ENCODE measurements at regions of chr4 and their contacts with region 1.

Region 1: DNA sequence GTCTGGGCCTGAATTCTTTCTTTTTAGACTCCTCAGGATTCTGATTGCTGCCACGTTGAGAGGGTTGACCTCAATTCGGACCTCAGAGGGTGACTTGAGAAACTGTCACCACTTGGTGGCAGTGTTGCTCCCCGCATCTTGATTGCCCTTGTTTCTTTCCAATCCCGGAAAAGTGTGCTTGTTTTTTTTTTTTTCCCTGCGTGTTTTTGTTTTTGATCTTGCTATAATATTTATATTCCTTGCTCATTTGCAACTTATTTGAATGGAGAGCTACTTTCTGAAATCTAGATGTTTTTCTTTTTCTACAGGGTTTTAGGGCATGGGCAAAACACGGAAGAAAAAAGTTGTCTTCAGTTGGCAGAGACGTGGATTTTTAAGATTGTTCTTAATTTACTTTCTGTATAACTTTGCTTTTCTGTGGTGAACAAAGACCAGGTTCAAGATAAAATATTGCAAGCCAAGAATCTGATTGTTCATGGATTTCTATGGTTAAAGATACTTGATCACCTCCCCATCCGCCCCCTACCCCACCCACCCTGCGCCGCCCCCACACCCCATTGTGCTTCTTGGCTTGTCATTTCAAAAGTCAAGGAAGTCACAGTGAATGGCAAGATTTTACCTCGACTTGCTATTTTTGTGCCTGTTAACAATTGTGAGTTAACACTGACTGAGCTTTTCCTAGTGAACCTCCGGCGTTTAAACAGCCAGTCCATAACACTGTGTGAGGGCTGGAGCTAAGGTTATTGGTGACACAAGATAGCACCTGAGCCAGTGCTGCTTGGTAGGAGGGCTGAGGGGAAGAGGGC is 102.1 kb downstream of the PTTG2 start:
- DNase-seq: peak; percentile 40 to 62
- ATAC-seq: peak; percentile 83 to 84
- H3K4me3 ChIP-seq: peak overlapping the region; percentile 20 to 43 (median 40)
- H3K27ac ChIP-seq: peak overlapping the region; percentile 3 to 60 (median 58)
- H3K4me1 ChIP-seq: peaks cover 0 to 5% of the 10 kb centered on the region in 2 donors
- H3K27me3 ChIP-seq: no peaks in the 10 kb centered on the region
- CTCF ChIP-seq: peak; percentile 53 to 86 (median 65)
- POLR2A ChIP-seq: no peak

Region 2: DNA sequence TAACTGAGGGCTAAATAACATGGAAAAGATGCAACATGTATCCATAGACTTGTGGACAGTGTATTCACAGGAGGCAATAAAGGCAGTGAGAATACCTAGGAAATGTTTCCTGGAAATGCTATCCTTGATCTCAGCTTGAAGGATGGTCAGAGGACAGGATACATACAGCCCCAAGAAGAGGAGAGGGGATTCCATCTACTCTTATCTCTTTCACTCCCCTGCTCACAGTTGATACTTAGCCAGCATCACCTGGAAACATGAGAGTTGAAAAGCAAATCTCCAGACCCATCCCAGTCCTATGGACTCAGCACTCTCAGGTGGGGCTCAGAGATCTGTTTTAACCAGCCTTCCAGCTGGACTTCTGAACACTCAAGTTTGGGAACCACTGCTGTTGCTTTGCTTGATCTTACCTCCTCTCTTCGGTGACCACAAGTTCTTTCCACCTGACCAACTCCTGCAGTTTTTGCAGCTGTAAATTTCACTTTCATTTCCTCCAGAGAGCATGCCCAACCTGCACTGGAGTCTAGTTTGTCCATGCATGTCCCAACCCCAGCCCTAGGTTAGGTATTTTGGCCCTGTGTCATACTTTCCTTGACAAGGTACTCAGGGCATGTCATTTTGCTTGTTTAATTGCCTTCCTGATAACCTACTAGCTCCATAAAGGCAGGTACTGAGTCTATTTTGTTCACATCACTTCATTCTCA is 386.6 kb before region 1 on chr4:
- in situ Hi-C with region 1: no loop called
- intact Hi-C with region 1: no loop called
- DNase-seq: no peak
- ATAC-seq: no peak
- H3K4me3 ChIP-seq: no peak overlapping the region
- H3K27ac ChIP-seq: no peak overlapping the region
- H3K4me1 ChIP-seq: peaks cover 44 to 48% of the 10 kb centered on the region in 2 donors
- H3K27me3 ChIP-seq: no peaks in the 10 kb centered on the region
- CTCF ChIP-seq: no peak
- POLR2A ChIP-seq: no peak

Region 3: GRCh38 chr4:38132107-38132673 is 69.9 kb after region 1 on chr4:
- in situ Hi-C with region 1: no loop called
- intact Hi-C with region 1: loop called (anchors 10 kb)
- DNase-seq: peak; percentile 31 to 49
- ATAC-seq: peak; percentile 76 to 91
- H3K4me3 ChIP-seq: no peak overlapping the region
- H3K27ac ChIP-seq: peak overlapping the region; percentile 2 to 68 (median 50)
- H3K4me1 ChIP-seq: peaks cover 0 to 5% of the 10 kb centered on the region in 2 donors
- H3K27me3 ChIP-seq: no peaks in the 10 kb centered on the region
- CTCF ChIP-seq: no peak
- POLR2A ChIP-seq: peak; percentile 11 to 55

Region 4: GRCh38 chr4:38179690-38180377 is 117.5 kb after region 1 on chr4:
- in situ Hi-C with region 1: loop called in 3 of 4 experiments (anchors 10 kb)
- intact Hi-C with region 1: loop called (anchors 5 kb)
- DNase-seq: peak; percentile 52 to 59
- ATAC-seq: peak; percentile 72 to 78
- H3K4me3 ChIP-seq: no peak overlapping the region
- H3K27ac ChIP-seq: no peak overlapping the region
- H3K4me1 ChIP-seq: peaks cover 3 to 12% of the 10 kb centered on the region in 2 donors
- H3K27me3 ChIP-seq: no peaks in the 10 kb centered on the region
- CTCF ChIP-seq: peak; percentile 79 to 94 (median 88)
- POLR2A ChIP-seq: no peak

Region 5: GRCh38 chr4:38675146-38676121 is 613.1 kb after region 1 on chr4:
- in situ Hi-C with region 1: no loop called
- intact Hi-C with region 1: loop called (anchors 5 kb)
- DNase-seq: peak; percentile 45 to 59
- ATAC-seq: peak; percentile 57 to 61
- H3K4me3 ChIP-seq: no peak overlapping the region
- H3K27ac ChIP-seq: peak overlapping the region; percentile 69 to 98 (median 72)
- H3K4me1 ChIP-seq: peaks cover 78 to 89% of the 10 kb centered on the region in 2 donors
- H3K27me3 ChIP-seq: no peaks in the 10 kb centered on the region
- CTCF ChIP-seq: peak; percentile 87 to 96 (median 91)
- POLR2A ChIP-seq: no peak

Region 6: GRCh38 chr4:38730830-38731646 is 668.7 kb after region 1 on chr4:
- in situ Hi-C with region 1: loop called in 2 of 4 experiments (anchors 25 kb)
- intact Hi-C with region 1: loop called (anchors 1 kb)
- DNase-seq: peak; percentile 37 to 65
- ATAC-seq: peak; percentile 73 to 75
- H3K4me3 ChIP-seq: no peak overlapping the region
- H3K27ac ChIP-seq: no peak overlapping the region
- H3K4me1 ChIP-seq: no peaks in the 10 kb centered on the region
- H3K27me3 ChIP-seq: no peaks in the 10 kb centered on the region
- CTCF ChIP-seq: peak; percentile 82 to 88 (median 85)
- POLR2A ChIP-seq: no peak

Region 7: GRCh38 chr4:38782452-38783108 is 720.3 kb after region 1 on chr4 and contains the start of gene TLR10:
- in situ Hi-C with region 1: no loop called
- intact Hi-C with region 1: loop called (anchors 2 kb)
- DNase-seq: no peak
- ATAC-seq: peak; percentile 56 to 60
- H3K4me3 ChIP-seq: no peak within 1 kb of the TSS
- H3K27ac ChIP-seq: no peak within 1 kb of the TSS
- H3K4me1 ChIP-seq: no peaks in the 10 kb centered on the region
- H3K27me3 ChIP-seq: no peaks in the 10 kb centered on the region
- CTCF ChIP-seq: peak; percentile 31 to 66 (median 56)
- POLR2A ChIP-seq: no peak
- total RNA-seq, gene TLR10: not detected

Measured in gastrocnemius medialis (tissue), 4 donors.